ENCODE measurements at regions of chr10 and their contacts with region 1.

Region 1: GRCh38 chr10:103592186-103593021 is 98.9 kb downstream of the NEURL1 start:
- DNase-seq: peak; percentile 40
- H3K4me3 ChIP-seq: no peak overlapping the region
- H3K27ac ChIP-seq: no peak overlapping the region
- H3K4me1 ChIP-seq: peaks cover 4% of the 10 kb centered on the region
- H3K27me3 ChIP-seq: no peaks in the 10 kb centered on the region
- CTCF ChIP-seq: peak; percentile 73 to 91
- POLR2A ChIP-seq: no peak

Region 2: DNA sequence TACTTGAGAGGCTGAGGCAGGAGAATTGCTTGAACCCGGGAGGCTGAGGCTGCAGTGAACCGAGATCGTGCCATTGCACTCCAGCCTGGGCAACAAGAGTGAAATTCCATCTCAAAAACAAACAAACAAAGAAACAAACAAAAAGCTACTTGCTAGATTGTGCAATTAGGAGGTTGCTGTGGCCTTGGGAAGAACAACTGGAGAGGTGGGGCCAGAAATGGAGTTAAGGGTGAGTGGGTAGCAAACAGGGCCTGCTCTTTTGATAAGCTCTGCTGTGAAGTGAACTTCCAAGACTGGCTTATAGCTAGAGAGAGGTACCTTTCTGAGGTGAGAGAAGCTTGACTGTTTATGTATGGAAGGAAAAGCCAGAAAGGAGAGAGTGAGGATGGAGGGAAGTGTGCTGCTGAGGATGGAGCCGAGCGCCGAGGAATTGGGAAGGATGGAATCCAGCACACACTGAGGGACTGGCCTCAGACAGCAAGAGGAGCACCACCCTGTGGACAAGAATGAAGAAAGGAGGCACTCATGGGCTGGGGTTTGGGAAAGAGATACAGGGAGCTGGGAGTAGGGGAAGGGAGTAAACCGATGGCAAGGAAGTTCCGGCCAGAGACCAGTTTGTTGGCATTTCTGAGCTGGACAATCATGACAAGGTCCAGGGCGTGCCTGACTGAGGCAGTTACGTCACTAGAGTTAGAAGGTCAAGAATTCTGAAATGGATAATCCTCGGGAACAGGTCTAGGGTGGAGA is 353.7 kb before region 1 on chr10:
- CTCF ChIA-PET with region 1: no interaction called
- POLR2A ChIA-PET with region 1: no interaction called
- dilution Hi-C with region 1: no loop called
- intact Hi-C with region 1: no loop called
- DNase-seq: peak; percentile 52
- H3K4me3 ChIP-seq: no peak overlapping the region
- H3K27ac ChIP-seq: no peak overlapping the region
- H3K4me1 ChIP-seq: peaks cover 13% of the 10 kb centered on the region
- H3K27me3 ChIP-seq: no peaks in the 10 kb centered on the region
- CTCF ChIP-seq: peak; percentile 25 to 50
- POLR2A ChIP-seq: no peak

Region 3: GRCh38 chr10:103416436-103417147 is 175.8 kb before region 1 on chr10:
- CTCF ChIA-PET with region 1: interaction called, 21 read pairs
- POLR2A ChIA-PET with region 1: no interaction called
- dilution Hi-C with region 1: no loop called
- intact Hi-C with region 1: loop called (anchors 2 kb)
- DNase-seq: peak; percentile 70
- H3K4me3 ChIP-seq: no peak overlapping the region
- H3K27ac ChIP-seq: no peak overlapping the region
- H3K4me1 ChIP-seq: no peaks in the 10 kb centered on the region
- H3K27me3 ChIP-seq: no peaks in the 10 kb centered on the region
- CTCF ChIP-seq: peak; percentile 36 to 40
- POLR2A ChIP-seq: no peak

Region 4: GRCh38 chr10:103491493-103492381 is 100.7 kb before region 1 on chr10:
- CTCF ChIA-PET with region 1: interaction called, 11 read pairs
- POLR2A ChIA-PET with region 1: no interaction called
- dilution Hi-C with region 1: no loop called
- intact Hi-C with region 1: no loop called
- DNase-seq: peak; percentile 38
- H3K4me3 ChIP-seq: no peak overlapping the region
- H3K27ac ChIP-seq: no peak overlapping the region
- H3K4me1 ChIP-seq: peaks cover 11% of the 10 kb centered on the region
- H3K27me3 ChIP-seq: peaks cover 17 to 33% of the 10 kb centered on the region in 2 experiments
- CTCF ChIP-seq: no peak
- POLR2A ChIP-seq: no peak

Region 5: DNA sequence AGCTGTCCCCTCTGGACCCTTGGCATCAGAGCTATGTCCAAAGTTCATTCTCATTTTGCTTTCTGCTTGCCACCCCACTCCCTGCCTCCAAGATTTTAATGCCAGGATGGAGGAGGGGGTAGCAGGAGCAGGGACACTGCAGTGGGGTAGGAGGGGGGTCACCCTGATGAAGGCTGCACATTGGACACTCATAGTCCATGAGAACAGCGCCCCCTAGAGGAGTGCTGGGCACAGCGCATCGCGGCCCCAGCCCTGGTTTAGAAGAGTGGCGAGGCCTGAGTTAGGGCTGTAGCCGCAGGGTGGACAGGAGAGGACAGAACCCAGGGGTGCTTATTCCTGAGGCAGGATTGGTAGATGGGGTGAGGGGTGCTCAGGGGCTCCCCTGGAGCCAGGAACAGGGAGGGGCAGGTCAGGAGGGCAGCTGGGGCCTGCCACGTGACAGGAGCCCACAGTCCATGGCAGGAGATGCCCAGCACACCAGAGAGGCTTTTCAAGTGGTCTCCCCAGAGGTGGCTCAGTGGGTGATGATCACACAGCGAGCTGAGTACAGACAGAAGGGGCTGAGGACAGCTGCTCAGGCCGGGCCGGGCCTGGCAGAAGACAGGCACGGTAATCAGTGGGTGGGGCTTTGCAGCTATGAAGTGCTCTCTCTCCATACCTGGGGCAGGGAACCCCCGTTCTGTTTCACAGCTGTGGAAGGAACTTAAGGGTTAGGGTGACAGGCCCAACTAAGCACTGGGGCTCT is 27.5 kb before region 1 on chr10:
- CTCF ChIA-PET with region 1: interaction called, 13 read pairs
- POLR2A ChIA-PET with region 1: no interaction called
- dilution Hi-C with region 1: no loop called
- intact Hi-C with region 1: no loop called
- DNase-seq: no peak
- H3K4me3 ChIP-seq: no peak overlapping the region
- H3K27ac ChIP-seq: no peak overlapping the region
- H3K4me1 ChIP-seq: no peaks in the 10 kb centered on the region
- H3K27me3 ChIP-seq: peaks cover 0 to 6% of the 10 kb centered on the region in 2 experiments
- CTCF ChIP-seq: peak; percentile 73 to 75
- POLR2A ChIP-seq: no peak

Region 6: DNA sequence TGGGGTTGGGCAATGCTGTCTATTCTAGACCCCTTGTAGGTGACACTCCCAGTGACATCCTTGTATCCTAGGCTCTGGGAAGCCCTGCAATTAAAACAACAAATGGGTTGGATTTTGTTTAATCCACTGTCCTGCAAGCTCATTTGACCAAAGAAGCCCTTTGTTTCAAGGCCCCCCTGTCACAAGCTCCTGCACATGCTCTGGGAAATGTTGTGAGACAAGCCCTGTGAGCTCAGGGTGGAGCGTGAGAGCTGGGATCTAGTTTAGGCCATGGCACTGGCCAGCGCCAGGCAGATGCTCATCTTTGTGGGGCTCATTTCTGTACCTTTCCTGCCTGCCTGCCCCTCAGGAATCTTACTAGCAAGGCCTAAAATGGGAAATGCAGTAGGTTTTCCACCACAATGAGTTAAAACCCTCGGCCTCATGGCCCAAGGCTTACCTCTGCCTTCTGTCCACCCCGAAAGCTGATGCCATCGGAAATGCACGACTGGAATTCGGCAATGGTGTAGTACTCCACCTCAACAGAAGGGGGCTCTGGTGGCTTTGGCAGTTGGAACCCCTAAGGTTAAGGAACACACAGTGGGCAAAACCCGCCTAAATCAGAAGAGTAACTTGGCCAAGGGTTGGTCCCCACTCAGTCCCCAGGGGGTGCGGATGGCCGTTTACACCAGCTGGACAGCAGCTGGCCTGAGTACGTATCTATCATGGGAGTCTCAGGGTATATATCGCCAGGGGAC is 13.1 kb after region 1 on chr10:
- CTCF ChIA-PET with region 1: interaction called, 11 read pairs
- POLR2A ChIA-PET with region 1: no interaction called
- dilution Hi-C with region 1: no loop called
- intact Hi-C with region 1: no loop called
- DNase-seq: peak; percentile 28
- H3K4me3 ChIP-seq: no peak overlapping the region
- H3K27ac ChIP-seq: no peak overlapping the region
- H3K4me1 ChIP-seq: no peaks in the 10 kb centered on the region
- H3K27me3 ChIP-seq: no peaks in the 10 kb centered on the region
- CTCF ChIP-seq: peak; percentile 63 to 71
- POLR2A ChIP-seq: no peak

Region 7: DNA sequence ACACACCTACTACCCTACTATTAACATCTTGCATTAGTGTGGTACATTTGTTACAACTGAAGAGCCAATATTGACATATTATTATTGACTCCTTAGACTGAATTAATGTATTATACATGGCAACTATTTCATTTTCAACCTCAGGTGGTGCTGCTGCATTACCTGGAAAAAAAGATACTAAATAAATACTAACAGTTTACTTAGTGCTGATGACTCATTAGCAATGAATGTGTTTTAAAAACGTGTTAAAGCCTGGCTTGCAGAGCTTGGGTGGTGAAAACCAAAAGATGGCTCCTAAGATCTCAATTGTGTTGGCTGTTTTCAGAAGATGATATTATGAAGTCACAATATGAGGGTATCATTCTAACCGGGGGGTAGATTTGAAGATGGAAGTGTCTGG is 605.0 kb after region 1 on chr10:
- CTCF ChIA-PET with region 1: no interaction called
- POLR2A ChIA-PET with region 1: no interaction called
- dilution Hi-C with region 1: no loop called
- intact Hi-C with region 1: no loop called
- DNase-seq: no peak
- H3K4me3 ChIP-seq: no peak overlapping the region
- H3K27ac ChIP-seq: no peak overlapping the region
- H3K4me1 ChIP-seq: no peaks in the 10 kb centered on the region
- H3K27me3 ChIP-seq: peaks cover 7 to 17% of the 10 kb centered on the region in 2 experiments
- CTCF ChIP-seq: no peak
- POLR2A ChIP-seq: no peak

Measured in endothelial cell of umbilical vein (primary cell).